ENCODE measurements at regions of chr1 and their contacts with region 1.

Region 1: GRCh38 chr1:235415008-235415904 is 48.0 kb downstream of the TBCE start:
- DNase-seq: peak; percentile 88
- H3K4me3 Mint-ChIP-seq: no peak overlapping the region
- H3K27ac Mint-ChIP-seq: no peak overlapping the region
- H3K4me1 Mint-ChIP-seq: peaks cover 18% of the 10 kb centered on the region
- H3K27me3 Mint-ChIP-seq: no peaks in the 10 kb centered on the region
- CTCF ChIP-seq: peak; percentile 86

Region 2: DNA sequence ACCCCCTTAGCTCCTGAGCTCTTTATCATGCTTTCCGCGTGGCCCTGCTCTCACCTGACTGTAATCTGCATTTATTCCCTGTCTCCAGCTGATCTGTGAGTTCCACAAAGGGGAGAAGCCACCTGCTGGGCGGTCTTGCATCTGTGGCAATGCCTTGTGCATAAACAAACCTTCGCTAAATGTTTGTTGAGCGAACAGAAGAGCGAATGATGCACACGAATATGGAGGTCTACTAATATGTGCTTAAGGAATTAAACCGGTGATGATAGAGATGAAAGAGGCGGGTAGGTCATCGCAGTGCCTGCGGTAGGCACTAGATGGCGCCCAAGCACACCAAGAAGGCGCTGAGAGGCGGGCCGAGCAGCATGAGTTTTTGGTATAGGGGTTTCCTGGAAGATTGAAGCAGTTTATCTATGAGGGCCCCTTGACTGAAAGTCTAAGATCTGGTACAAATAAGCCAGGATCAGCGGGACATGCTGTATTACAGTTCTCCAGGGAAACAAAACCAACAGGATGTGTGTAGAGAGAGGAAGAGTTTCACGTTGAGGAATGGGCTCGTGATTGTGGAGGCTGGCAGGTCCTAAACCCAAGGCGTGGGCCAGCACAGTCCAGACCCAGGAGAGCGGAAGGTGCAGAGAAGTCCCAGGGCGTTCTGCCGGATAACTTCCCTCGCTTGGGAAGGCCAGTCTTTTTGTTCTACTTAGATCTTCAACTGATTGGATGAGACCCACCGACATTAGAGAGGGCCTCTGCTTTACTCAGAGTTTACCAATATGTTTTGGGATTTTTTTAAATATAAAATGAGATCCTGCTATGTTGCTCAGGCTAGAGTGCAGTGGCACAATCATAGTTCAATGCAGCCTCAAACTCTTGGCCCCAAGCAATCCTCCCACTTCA is 321.3 kb before region 1 on chr1:
- CTCF ChIA-PET with region 1: interaction called, 25 read pairs
- POLR2A ChIA-PET with region 1: no interaction called
- intact Hi-C with region 1: loop called (anchors 1 kb)
- DNase-seq: peak; percentile 83
- H3K4me3 Mint-ChIP-seq: no peak overlapping the region
- H3K27ac Mint-ChIP-seq: no peak overlapping the region
- H3K4me1 Mint-ChIP-seq: peaks cover 6% of the 10 kb centered on the region
- H3K27me3 Mint-ChIP-seq: no peaks in the 10 kb centered on the region
- CTCF ChIP-seq: peak; percentile 100

Region 3: DNA sequence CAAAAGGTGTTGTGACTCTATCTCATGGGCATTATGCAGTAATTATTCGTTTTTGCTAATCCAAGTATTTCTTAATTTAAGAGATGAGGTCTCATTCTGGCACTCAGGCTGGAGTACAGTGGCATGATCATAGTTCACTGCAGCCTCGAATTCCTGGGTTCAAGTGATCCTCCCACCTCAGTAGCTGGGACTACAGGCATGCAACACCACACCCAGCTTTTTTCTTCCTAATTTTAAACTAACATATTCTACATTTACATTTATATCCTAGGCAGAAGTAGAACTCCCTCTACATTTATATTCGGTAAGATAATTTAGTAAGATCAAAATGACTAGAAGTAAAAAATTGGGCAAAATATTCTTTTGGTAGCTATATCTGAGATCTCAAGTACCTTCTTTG is 203.7 kb before region 1 on chr1:
- CTCF ChIA-PET with region 1: interaction called, 11 read pairs
- POLR2A ChIA-PET with region 1: no interaction called
- intact Hi-C with region 1: no loop called
- DNase-seq: no peak
- H3K4me3 Mint-ChIP-seq: no peak overlapping the region
- H3K27ac Mint-ChIP-seq: peak overlapping the region; percentile 57
- H3K4me1 Mint-ChIP-seq: no peaks in the 10 kb centered on the region
- H3K27me3 Mint-ChIP-seq: no peaks in the 10 kb centered on the region
- CTCF ChIP-seq: no peak

Region 4: DNA sequence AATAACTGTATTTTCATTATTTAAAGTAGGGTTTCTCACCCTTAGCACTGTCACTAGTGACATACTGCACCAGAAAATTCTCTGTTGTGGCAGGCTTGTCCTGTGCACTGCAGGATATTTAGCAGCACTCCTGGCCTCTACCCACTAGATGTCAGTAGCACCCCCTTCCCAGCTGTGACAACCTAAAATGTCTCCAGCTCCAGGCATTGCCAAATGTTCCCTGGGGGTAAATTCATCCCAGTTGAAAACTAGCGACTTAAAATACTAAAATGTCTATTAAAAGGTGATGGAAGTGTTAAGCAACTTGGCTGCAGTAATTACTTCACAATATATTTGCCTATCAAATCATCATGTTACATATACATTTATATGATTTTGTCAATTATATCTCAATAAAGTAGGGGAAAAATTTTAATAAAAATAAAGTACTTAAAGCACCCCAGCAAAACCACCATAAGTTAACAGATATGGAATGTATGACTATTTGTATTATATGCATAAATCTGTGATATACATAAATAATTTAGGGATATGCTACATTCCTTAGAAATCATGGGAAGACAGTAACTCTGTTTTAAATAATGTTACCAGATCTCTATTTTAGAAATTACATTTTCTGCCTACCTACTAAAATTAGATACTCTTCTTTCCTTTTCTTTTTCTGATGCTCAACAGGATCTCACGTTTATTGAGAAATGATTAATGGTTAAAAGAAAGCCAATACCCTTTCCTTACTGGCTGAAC is 161.9 kb before region 1 on chr1:
- CTCF ChIA-PET with region 1: interaction called, 76 read pairs
- POLR2A ChIA-PET with region 1: interaction called, 17 read pairs
- intact Hi-C with region 1: loop called (anchors 1 kb)
- DNase-seq: peak; percentile 95
- H3K4me3 Mint-ChIP-seq: no peak overlapping the region
- H3K27ac Mint-ChIP-seq: peak overlapping the region; percentile 49
- H3K4me1 Mint-ChIP-seq: peaks cover 10% of the 10 kb centered on the region
- H3K27me3 Mint-ChIP-seq: no peaks in the 10 kb centered on the region
- CTCF ChIP-seq: peak; percentile 98

Region 5: DNA sequence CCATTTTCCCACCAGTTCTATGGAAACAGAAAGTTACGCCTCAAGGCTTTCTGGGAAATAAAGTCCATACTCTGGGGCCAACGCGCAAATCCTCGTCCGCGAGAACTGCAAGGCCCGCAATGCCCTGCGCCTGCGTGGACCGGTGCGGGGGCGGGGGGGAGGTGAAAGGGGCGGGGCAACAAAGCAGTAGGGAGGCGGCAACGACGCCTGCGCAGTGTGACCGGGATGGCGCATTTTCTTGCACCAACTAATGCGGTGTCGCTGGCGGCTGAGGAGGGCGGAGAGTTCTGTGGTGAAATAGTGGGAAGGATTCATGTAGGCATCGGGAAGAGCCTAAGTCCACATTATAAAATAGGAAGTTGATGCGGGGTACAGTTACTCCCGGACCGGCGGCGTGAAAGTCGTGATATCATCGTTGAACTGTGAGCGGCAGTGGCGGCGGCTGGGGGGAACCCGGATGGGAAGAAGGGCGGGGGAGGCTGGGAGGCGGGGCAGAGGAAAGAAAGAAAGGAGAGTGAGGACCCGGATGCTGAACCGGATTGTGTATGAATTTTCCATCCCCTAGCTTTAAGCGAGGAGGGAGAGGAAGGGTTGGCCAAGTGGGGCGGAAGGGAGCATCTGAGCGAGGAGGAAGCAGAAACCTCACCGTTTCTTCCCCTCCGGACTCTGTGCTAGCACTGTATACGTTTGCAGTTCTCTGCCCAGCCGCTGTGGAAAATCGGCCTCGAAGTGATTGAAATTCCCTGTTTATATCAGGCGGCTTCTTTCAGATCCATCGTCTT is 86.7 kb before region 1 on chr1 and contains the start of gene GGPS1:
- CTCF ChIA-PET with region 1: interaction called, 61 read pairs
- POLR2A ChIA-PET with region 1: interaction called, 107 read pairs
- intact Hi-C with region 1: loop called (anchors 1 kb)
- DNase-seq: peak; percentile 100
- H3K4me3 Mint-ChIP-seq: no peak within 1 kb of the TSS
- H3K27ac Mint-ChIP-seq: no peak within 1 kb of the TSS
- H3K4me1 Mint-ChIP-seq: peaks cover 23% of the 10 kb centered on the region
- H3K27me3 Mint-ChIP-seq: no peaks in the 10 kb centered on the region
- CTCF ChIP-seq: peak; percentile 6
- total RNA-seq, gene GGPS1: 56.5 and 74.8 TPM in 2 replicates

Region 6: DNA sequence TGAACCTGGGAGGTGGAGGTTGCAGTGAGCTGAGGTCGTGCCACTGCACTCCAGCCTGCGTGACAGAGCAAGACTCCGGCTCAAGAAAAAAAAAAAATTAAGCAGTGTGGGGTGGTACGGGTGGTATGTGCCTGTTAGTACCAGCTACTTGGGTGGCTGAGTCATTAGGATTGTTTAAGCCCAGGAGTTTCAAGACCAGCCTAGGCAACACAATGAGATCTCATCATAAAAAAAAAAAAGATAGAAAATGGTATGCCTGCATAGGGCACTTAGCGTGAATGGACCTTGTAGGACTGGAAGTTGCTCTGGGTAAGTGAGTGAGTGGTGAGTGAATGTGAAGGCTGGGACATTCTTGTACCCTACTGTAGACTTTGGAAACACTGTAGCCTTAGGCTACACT is 11.1 kb before region 1 on chr1:
- CTCF ChIA-PET with region 1: interaction called, 54 read pairs
- POLR2A ChIA-PET with region 1: interaction called, 5 read pairs
- intact Hi-C with region 1: no loop called
- DNase-seq: peak; percentile 90
- H3K4me3 Mint-ChIP-seq: no peak overlapping the region
- H3K27ac Mint-ChIP-seq: peak overlapping the region; percentile 29
- H3K4me1 Mint-ChIP-seq: peaks cover 38% of the 10 kb centered on the region
- H3K27me3 Mint-ChIP-seq: no peaks in the 10 kb centered on the region
- CTCF ChIP-seq: no peak

Region 7: DNA sequence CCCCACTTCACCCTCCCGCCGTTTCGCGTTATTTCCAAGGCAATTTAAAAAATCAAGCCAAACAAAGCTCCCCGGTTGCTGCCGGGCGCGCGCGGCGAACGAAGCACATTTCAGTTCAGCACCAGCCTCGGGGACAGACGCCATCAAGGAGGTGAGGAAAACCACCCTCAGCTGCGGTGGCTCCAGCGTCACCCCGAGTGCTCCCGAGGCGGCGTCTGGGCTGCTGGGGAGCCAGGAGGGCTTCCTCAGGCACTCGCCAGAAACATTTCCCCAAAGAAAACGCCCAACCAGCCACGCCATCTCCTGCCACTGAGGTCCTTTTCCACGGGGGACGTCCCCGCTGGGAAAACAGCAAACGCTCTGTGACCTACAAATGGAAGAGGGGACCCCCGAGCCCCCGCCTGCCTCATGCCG is 233.7 kb after region 1 on chr1:
- CTCF ChIA-PET with region 1: no interaction called
- POLR2A ChIA-PET with region 1: no interaction called
- intact Hi-C with region 1: no loop called
- DNase-seq: no peak
- H3K4me3 Mint-ChIP-seq: peak overlapping the region; percentile 61
- H3K27ac Mint-ChIP-seq: no peak overlapping the region
- H3K4me1 Mint-ChIP-seq: no peaks in the 10 kb centered on the region
- H3K27me3 Mint-ChIP-seq: no peaks in the 10 kb centered on the region
- CTCF ChIP-seq: no peak

Region 8: GRCh38 chr1:236120721-236121153 is 705.5 kb after region 1 on chr1:
- CTCF ChIA-PET with region 1: no interaction called
- POLR2A ChIA-PET with region 1: no interaction called
- intact Hi-C with region 1: no loop called
- DNase-seq: no peak
- H3K4me3 Mint-ChIP-seq: no peak overlapping the region
- H3K27ac Mint-ChIP-seq: no peak overlapping the region
- H3K4me1 Mint-ChIP-seq: no peaks in the 10 kb centered on the region
- H3K27me3 Mint-ChIP-seq: no peaks in the 10 kb centered on the region
- CTCF ChIP-seq: no peak

Region 9: DNA sequence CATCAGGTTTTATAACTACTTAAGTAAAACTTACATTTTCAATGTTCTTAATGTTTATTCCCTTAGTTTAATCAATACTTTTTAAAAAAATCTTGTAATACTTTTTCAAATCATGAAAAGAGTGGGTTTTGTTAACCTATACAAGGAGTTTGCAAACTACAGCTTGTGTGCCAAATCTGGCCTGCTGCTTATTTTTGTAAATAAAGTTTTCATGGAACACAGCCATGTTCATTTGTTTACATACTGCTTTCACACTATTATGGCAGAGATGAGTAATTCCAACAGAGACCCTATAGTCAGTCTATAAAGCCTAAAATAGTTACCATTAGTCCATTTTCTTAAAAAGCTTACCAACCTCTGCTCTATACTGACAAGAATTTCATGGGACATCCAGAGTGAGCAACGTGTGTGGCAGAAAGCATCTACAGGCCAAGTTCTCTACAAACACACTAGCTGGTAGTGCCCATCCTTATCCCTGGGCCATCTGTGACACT is 823.9 kb after region 1 on chr1:
- CTCF ChIA-PET with region 1: no interaction called
- POLR2A ChIA-PET with region 1: no interaction called
- intact Hi-C with region 1: no loop called
- DNase-seq: no peak
- H3K4me3 Mint-ChIP-seq: no peak overlapping the region
- H3K27ac Mint-ChIP-seq: no peak overlapping the region
- H3K4me1 Mint-ChIP-seq: peaks cover 5% of the 10 kb centered on the region
- H3K27me3 Mint-ChIP-seq: no peaks in the 10 kb centered on the region
- CTCF ChIP-seq: no peak

Measured in MCF 10A (cell line).